HAP-1 (cell line): ENCODE measurements at regions of chr18 and their contacts with region 1.

Region 1: GRCh38 chr18:41391616-41392595 is 563.1 kb upstream of the PIK3C3 start:
- DNase-seq: peak; percentile 82 to 84
- H3K4me3 ChIP-seq: peak overlapping the region; percentile 17
- H3K4me1 ChIP-seq: peaks cover 12% of the 10 kb centered on the region
- H3K27me3 ChIP-seq: no peaks in the 10 kb centered on the region

Region 2: DNA sequence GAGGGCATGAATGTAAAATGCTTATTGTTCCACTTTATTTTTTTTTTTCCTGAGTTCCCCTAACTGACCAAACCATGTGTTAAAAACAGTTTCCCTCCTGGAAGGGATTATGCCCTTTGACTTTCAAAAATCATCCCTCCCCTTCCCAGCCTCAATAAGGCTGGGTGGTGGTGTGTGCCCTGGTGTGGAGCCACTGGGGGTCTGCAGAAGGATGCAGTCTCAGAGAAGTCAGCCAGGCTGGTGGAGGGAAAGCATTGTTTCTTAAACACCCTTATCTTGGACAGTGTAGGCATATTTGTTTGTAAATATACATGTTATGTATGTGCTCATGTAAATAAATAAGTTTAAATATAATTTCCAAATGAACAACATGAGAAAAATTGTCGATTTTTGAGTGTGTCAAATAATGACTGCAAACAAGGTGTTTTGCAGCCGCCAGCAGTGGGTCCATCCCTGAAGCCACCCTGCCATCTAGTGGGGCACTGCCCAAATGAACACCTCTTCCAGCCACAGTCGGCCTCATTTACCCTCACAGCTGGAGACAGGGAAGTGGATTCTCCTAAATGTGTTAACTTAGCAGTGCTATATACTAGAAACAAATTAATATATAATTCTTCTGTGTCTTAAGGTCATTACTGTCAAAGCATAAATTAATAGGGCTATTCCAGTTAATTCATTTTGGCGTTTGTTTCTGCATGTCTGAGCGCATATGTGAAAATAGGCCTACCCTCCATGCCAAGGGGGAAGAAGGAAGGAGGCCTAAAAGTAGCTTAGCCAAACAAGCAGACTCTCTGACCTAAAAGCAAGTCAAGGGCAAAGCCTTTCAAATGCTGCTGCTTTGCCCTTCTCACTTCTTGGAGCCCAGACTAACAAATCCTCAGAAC is 353.5 kb after region 1 on chr18:
- in situ Hi-C with region 1: loop called (anchors 10 kb)
- DNase-seq: peak; percentile 64 to 81
- H3K4me3 ChIP-seq: no peak overlapping the region
- H3K4me1 ChIP-seq: peaks cover 8% of the 10 kb centered on the region
- H3K27me3 ChIP-seq: no peaks in the 10 kb centered on the region

Region 3: GRCh38 chr18:41906528-41907146 is 514.7 kb after region 1 on chr18:
- in situ Hi-C with region 1: loop called (anchors 25 kb)
- DNase-seq: peak; percentile 12 to 69
- H3K4me3 ChIP-seq: no peak overlapping the region
- H3K4me1 ChIP-seq: no peaks in the 10 kb centered on the region
- H3K27me3 ChIP-seq: no peaks in the 10 kb centered on the region